ENCODE measurements at regions of chr16 and their contacts with region 1.

Region 1: DNA sequence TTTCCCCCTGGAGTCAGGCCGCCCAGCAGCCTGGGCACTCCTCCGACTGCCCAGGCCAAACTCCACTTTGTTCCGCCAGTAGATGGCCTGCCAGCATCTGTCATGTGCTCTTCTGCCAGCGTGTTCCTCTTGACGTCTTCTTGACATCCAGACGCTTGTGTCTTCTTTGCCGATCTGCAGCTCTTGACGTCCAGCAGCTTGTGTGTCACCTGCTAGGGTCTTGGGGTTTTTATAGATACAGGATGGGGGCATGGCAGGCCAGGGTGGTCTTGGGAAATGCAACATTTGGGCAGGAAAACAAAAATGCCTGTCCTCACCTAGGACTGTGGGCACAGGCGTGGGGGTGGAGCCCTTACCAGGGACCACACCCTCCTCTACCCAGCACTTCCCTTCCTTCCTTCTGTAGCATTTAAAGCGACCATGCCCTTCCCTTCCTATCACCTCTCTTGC is 88.7 kb downstream of the BMERB1 start:
- DNase-seq: peak; percentile 50
- H3K4me3 ChIP-seq: no peak overlapping the region
- H3K27ac ChIP-seq: no peak overlapping the region
- H3K4me1 ChIP-seq: peaks cover 4% of the 10 kb centered on the region
- CTCF ChIP-seq: peak; percentile 54

Region 2: GRCh38 chr16:15404792-15405191 is 118.3 kb before region 1 on chr16:
- CTCF ChIA-PET with region 1: no interaction called
- POLR2A ChIA-PET with region 1: no interaction called
- intact Hi-C with region 1: no loop called
- DNase-seq: no peak
- H3K4me3 ChIP-seq: no peak overlapping the region
- H3K27ac ChIP-seq: no peak overlapping the region
- H3K4me1 ChIP-seq: peaks cover 10% of the 10 kb centered on the region
- CTCF ChIP-seq: no peak

Region 3: DNA sequence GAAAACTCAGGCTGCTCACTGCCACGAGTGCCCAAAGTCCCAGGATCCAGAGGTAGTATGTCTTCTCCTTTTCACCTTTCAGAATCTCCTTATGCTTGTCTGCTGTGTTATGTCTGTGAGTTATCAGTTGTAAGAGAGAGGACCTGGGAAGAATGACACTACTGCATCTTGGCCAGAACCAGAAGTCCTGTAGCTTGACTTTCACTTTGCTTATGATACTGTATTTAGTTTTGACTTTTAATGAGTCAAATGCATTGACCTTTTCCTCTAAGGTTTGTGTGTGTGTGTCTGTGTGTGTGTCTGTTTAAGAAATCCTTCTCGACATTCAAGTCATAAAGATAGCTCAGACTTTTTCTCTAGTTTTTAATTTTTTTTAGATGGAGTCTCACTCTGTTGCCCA is 45.3 kb before region 1 on chr16:
- CTCF ChIA-PET with region 1: no interaction called
- POLR2A ChIA-PET with region 1: no interaction called
- intact Hi-C with region 1: loop called (anchors 10 kb)
- DNase-seq: no peak
- H3K4me3 ChIP-seq: no peak overlapping the region
- H3K27ac ChIP-seq: no peak overlapping the region
- H3K4me1 ChIP-seq: no peaks in the 10 kb centered on the region
- CTCF ChIP-seq: no peak

Region 4: DNA sequence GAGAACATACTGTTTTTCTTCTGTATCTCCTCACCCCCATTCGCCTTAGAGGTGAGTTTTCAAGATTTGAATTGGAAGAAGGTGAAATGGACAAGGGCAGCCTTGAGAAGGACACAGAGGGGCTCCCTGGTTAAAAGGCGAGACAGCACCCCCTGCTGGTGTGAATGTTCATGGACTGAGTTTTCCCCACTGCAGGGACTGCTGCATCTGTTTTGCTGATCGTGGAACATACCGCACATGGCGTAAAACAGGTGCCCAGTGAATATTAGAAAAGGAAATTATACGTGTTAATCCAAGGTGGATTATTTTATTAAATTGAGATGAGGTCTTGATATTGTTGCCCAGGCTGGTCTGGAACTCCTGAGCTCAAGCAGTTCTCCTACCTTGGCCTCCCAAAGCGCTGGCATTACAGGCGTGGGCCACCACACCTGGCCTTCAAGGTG is 181.4 kb after region 1 on chr16:
- CTCF ChIA-PET with region 1: no interaction called
- POLR2A ChIA-PET with region 1: no interaction called
- intact Hi-C with region 1: loop called (anchors 10 kb)
- DNase-seq: peak; percentile 65
- H3K4me3 ChIP-seq: no peak overlapping the region
- H3K27ac ChIP-seq: no peak overlapping the region
- H3K4me1 ChIP-seq: no peaks in the 10 kb centered on the region
- CTCF ChIP-seq: peak; percentile 95

Measured in OCI-LY7 (cell line).